ENCODE measurements at regions of chr15 and their contacts with region 1.

Region 1: GRCh38 chr15:74438721-74439316 is 5.1 kb upstream of the SEMA7A start:
- DNase-seq: peak; percentile 88
- H3K4me3 Mint-ChIP-seq: no peak overlapping the region
- H3K27ac Mint-ChIP-seq: peak overlapping the region; percentile 14
- H3K4me1 Mint-ChIP-seq: peaks cover 35% of the 10 kb centered on the region
- H3K27me3 Mint-ChIP-seq: no peaks in the 10 kb centered on the region

Region 2: GRCh38 chr15:74011610-74012009 is 427.2 kb before region 1 on chr15:
- CTCF ChIA-PET with region 1: no interaction called
- intact Hi-C with region 1: no loop called
- DNase-seq: no peak
- H3K4me3 Mint-ChIP-seq: no peak overlapping the region
- H3K27ac Mint-ChIP-seq: no peak overlapping the region
- H3K4me1 Mint-ChIP-seq: peaks cover 61% of the 10 kb centered on the region
- H3K27me3 Mint-ChIP-seq: no peaks in the 10 kb centered on the region

Region 3: GRCh38 chr15:74428442-74428787 is 10.4 kb before region 1 on chr15:
- CTCF ChIA-PET with region 1: interaction called, 11 read pairs
- intact Hi-C with region 1: no loop called
- DNase-seq: no peak
- H3K4me3 Mint-ChIP-seq: no peak overlapping the region
- H3K27ac Mint-ChIP-seq: peak overlapping the region; percentile 85
- H3K4me1 Mint-ChIP-seq: peaks cover 84% of the 10 kb centered on the region
- H3K27me3 Mint-ChIP-seq: no peaks in the 10 kb centered on the region

Region 4: GRCh38 chr15:74449643-74450205 is 10.9 kb after region 1 on chr15:
- CTCF ChIA-PET with region 1: interaction called, 11 read pairs
- intact Hi-C with region 1: no loop called
- DNase-seq: no peak
- H3K4me3 Mint-ChIP-seq: no peak overlapping the region
- H3K27ac Mint-ChIP-seq: no peak overlapping the region
- H3K4me1 Mint-ChIP-seq: peaks cover 4% of the 10 kb centered on the region
- H3K27me3 Mint-ChIP-seq: no peaks in the 10 kb centered on the region

Region 5: DNA sequence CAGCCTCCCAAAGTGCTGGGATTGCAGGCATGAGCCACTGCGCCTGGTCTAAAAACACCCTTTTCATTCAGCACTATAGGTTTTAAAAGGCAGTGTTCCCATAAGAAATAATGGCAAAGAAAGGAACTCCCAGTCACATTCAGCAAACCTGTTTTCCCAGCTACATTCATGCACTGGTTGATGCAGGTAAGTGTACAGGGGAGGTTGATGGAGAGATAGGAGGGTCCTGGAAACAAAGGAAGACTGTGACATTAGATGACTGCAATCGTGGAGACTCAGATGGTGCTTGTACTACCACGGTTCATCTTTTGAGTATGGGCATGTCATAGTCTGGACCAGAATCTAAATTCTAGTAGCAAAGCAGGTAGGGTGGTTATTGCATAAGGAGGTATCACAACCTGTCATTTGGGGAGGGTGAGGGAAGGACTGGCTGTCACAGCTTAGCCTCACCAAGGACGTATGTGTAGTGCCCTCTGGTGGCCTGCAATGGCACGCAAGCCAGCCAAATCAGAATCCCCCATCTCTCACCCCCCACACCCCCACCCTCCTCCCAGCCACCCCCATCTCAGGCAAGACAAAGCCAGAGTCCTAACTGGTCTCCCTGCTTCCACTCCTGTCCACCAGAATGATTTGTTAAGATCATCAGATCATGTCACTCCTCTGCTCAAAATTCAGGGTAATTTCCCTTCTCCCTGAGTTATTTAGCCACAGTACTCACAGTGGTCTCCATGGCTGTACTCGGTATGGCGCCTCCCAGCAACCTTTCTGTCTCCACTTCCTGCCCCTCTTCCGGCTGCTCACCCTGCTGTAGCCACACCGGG is 50.9 kb after region 1 on chr15:
- CTCF ChIA-PET with region 1: interaction called, 3 read pairs
- intact Hi-C with region 1: loop called (anchors 1 kb)
- DNase-seq: peak; percentile 83
- H3K4me3 Mint-ChIP-seq: no peak overlapping the region
- H3K27ac Mint-ChIP-seq: no peak overlapping the region
- H3K4me1 Mint-ChIP-seq: peaks cover 9% of the 10 kb centered on the region
- H3K27me3 Mint-ChIP-seq: no peaks in the 10 kb centered on the region

Measured in activated naive CD4-positive, alpha-beta T cell treated with anti-CD3 and anti-CD28 coated beads for 36 hours (primary cell).